ENCODE measurements at regions of chr1 and their contacts with region 1.

Region 1: GRCh38 chr1:176149939-176150807 is 56.9 kb downstream of the COP1 start:
- DNase-seq: no peak
- H3K4me3 ChIP-seq: no peak overlapping the region
- H3K27ac ChIP-seq: no peak overlapping the region
- H3K4me1 ChIP-seq: no peaks in the 10 kb centered on the region
- H3K27me3 ChIP-seq: no peaks in the 10 kb centered on the region
- CTCF ChIP-seq: no peak
- POLR2A ChIP-seq: no peak

Region 2: GRCh38 chr1:176384841-176385240 is 234.7 kb after region 1 on chr1:
- intact Hi-C with region 1: loop called (anchors 5 kb)
- DNase-seq: no peak
- H3K4me3 ChIP-seq: no peak overlapping the region
- H3K27ac ChIP-seq: no peak overlapping the region
- H3K4me1 ChIP-seq: no peaks in the 10 kb centered on the region
- H3K27me3 ChIP-seq: no peaks in the 10 kb centered on the region
- CTCF ChIP-seq: no peak
- POLR2A ChIP-seq: no peak

Measured in breast epithelium (tissue), 4 donors.